Right ventricle myocardium superior (tissue), 1 donor: ENCODE measurements at regions of chr17 and their contacts with region 1.

Region 1: DNA sequence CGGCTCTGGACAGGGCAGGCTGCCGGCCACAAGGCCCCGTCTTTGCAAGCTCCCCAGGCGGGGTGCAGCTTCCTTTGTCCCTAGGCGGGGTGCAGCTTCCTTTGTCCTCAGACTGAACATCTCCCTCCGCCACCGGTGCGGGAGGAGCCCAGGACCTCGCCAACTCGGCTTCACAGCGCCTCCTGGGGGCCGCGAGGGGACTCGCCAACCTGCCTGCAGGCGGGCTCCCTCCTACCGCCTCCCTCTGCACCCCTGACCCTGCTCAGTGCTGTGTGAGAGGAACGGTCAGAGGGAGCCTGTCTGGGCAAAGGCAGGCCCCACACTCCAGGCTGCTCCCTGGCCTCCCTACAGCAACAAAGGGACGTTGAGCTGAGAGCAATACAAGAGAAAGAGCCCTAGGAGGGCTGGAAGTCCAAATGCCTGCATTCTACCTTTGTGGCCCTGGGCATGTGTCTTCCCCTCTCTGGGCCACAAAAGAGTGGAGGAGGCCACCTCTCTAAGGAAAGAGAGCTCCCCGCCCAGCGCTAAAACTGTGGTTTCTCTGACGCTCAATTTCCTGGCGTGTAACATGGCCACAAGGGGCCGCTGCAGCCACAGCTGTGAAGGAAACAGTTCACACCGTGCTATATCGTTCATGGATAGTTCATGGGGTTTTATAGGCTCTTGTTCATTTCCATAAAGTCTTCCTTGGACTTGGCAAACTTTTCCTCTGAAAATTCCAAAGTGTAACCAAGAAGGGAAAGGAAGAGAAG is 20.9 kb upstream of the KRT19 start:
- DNase-seq: peak; percentile 89
- ATAC-seq: peak; percentile 93

Region 2: DNA sequence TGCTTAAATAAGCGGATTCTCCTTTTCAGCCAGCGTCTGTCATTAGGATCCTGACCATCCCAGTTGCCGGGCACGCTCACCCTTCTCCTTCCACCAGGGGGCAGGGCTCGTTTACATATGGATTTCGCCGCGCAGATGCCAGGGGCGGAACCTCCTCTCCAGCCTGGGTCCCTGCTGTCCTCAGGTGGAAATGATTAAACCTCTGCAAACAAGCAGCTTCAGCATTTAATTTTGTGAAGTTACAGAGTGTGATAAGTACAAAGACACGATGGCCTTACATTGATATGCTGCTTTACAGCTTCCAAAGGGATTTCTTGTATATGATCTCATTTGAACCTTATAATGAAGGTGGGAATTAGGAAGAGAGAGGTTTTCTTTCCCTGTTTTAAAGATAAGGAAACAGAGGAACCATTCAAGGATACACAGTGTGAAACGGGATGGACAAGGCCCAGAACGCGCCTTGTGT is 745.4 kb before region 1 on chr17:
- intact Hi-C with region 1: loop called (anchors 10 kb)
- DNase-seq: peak; percentile 85
- ATAC-seq: peak; percentile 90

Region 3: GRCh38 chr17:40909351-40909750 is 639.7 kb before region 1 on chr17:
- intact Hi-C with region 1: loop called (anchors 10 kb)
- DNase-seq: peak; percentile 76
- ATAC-seq: peak; percentile 92

Region 4: GRCh38 chr17:41648411-41649195 is 99.6 kb after region 1 on chr17:
- intact Hi-C with region 1: loop called (anchors 2 kb)
- DNase-seq: peak; percentile 90
- ATAC-seq: peak; percentile 97